CD8-positive, alpha-beta T cell (primary cell): ENCODE measurements at regions of chr22 and their contacts with region 1.

Region 1: GRCh38 chr22:43187171-43188099 is 501 bp upstream of the TTLL12 start:
- DNase-seq: peak; percentile 89 to 99 (median 97)
- ATAC-seq: peak; percentile 84
- H3K4me3 ChIP-seq: peak overlapping the region; percentile 46
- H3K4me3 Mint-ChIP-seq: peak overlapping the region; percentile 79
- H3K27ac ChIP-seq: peak overlapping the region; percentile 84 to 90
- H3K27ac Mint-ChIP-seq: peak overlapping the region; percentile 98
- H3K4me1 ChIP-seq: peaks cover 16% of the 10 kb centered on the region
- H3K4me1 Mint-ChIP-seq: peaks cover 21% of the 10 kb centered on the region
- H3K27me3 ChIP-seq: no peaks in the 10 kb centered on the region
- H3K27me3 Mint-ChIP-seq: no peaks in the 10 kb centered on the region
- CTCF ChIP-seq: peak; percentile 23

Region 2: DNA sequence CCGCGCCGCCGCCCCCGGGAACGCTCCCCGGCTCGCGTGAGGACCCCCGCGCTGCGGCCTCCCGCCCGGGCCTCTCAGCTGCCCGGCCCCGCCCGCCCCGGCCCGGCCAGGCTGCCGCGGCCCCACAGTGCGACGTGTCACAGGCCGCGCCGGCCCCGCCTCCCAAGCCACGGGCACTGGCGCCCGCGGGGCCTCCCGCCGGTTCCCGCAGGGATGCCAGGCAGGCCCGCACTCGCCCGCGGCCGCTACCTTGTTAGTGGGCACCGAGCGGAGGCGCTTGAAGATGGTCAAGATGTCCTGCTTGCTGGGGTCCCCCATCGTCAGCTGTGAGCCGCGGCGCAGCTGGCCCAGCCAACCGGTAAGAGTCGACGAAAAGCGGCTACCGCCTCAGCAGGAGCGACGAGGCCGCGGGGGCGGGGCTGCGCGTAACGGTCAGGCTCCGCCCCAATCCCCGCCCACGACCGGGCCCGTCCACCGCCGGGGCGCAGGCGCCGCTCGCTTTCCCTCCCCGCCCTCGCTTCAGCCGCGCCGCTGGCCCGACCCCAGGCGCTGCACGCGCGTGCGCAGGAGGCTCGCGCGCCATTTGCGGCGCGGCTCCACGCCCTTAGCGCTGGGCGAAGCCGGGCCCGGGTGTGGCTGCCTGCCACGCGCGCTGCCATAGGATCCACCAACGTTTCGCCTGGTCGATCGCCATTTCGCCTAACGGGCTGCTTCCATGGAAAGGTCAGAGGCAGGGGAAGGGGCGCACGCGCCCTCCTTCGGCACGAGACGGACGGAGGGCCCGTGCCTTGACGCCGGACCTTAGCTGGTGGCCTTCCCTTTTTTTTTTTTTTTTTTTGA is 330.4 kb before region 1 on chr22 and contains the start of gene ARFGAP3:
- CTCF ChIA-PET with region 1: no interaction called
- POLR2A ChIA-PET with region 1: interaction called, 5 read pairs
- intact Hi-C with region 1: loop called in 1 of 2 experiments (anchors 2 kb)
- DNase-seq: peak; percentile 89 to 98 (median 94)
- ATAC-seq: peak; percentile 95
- H3K4me3 ChIP-seq: peak within 1 kb of the TSS; percentile 85 to 91
- H3K4me3 Mint-ChIP-seq: peak within 1 kb of the TSS; percentile 80
- H3K27ac ChIP-seq: peak within 1 kb of the TSS; percentile 90 to 92
- H3K27ac Mint-ChIP-seq: peak within 1 kb of the TSS; percentile 85
- H3K4me1 ChIP-seq: peaks cover 24% of the 10 kb centered on the region
- H3K4me1 Mint-ChIP-seq: peaks cover 11% of the 10 kb centered on the region
- H3K27me3 ChIP-seq: no peaks in the 10 kb centered on the region
- H3K27me3 Mint-ChIP-seq: no peaks in the 10 kb centered on the region
- CTCF ChIP-seq: no peak
- total RNA-seq, gene ARFGAP3: 25.4 TPM

Region 3: DNA sequence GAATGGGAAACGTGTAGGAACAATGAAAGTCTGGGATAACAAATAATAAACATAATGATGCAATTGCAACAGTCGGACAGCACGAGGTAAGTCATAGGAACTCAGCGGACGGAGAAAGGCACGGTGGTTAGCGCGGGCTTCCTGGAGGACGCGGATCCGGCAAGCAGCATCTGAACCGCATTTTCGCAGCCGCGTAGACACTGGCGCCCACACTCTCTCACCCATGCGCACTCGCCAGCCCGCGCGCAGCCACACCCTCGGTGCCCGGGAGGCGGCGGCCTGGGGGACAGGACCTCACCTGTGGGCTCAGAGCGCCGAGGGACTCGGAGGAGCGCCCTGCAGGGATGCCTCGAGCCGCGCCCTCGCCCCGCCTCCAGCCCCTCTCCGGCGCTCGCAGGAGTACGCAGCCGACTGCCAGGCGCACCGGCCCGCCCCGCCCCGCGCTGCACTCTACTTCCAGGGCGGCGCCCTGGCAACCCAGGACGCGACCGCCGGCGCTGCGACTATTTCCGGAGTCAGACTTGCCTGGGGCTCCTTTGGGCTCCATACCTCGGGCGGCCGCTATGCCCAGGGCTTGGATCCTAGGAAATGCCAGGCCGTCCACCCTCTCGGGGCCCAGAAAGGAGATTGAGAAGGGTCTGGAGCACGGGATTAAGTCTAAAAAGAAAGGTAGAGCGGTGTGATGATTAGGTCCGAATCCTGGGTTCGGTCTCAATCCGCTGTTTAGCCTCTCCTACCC is 98.3 kb before region 1 on chr22 and contains the start of gene TTLL1:
- CTCF ChIA-PET with region 1: no interaction called
- POLR2A ChIA-PET with region 1: no interaction called
- intact Hi-C with region 1: loop called in 1 of 2 experiments (anchors 2 kb)
- DNase-seq: peak; percentile 70 to 91 (median 86)
- ATAC-seq: peak; percentile 90
- H3K4me3 ChIP-seq: peak within 1 kb of the TSS; percentile 60 to 62
- H3K4me3 Mint-ChIP-seq: peak within 1 kb of the TSS; percentile 85
- H3K27ac ChIP-seq: peak within 1 kb of the TSS; percentile 42 to 52
- H3K27ac Mint-ChIP-seq: peak within 1 kb of the TSS; percentile 71
- H3K4me1 ChIP-seq: peaks cover 8% of the 10 kb centered on the region
- H3K4me1 Mint-ChIP-seq: peaks cover 25% of the 10 kb centered on the region
- H3K27me3 ChIP-seq: no peaks in the 10 kb centered on the region
- H3K27me3 Mint-ChIP-seq: no peaks in the 10 kb centered on the region
- CTCF ChIP-seq: no peak
- total RNA-seq, gene TTLL1: 3.5 to 3.9 TPM

Region 4: DNA sequence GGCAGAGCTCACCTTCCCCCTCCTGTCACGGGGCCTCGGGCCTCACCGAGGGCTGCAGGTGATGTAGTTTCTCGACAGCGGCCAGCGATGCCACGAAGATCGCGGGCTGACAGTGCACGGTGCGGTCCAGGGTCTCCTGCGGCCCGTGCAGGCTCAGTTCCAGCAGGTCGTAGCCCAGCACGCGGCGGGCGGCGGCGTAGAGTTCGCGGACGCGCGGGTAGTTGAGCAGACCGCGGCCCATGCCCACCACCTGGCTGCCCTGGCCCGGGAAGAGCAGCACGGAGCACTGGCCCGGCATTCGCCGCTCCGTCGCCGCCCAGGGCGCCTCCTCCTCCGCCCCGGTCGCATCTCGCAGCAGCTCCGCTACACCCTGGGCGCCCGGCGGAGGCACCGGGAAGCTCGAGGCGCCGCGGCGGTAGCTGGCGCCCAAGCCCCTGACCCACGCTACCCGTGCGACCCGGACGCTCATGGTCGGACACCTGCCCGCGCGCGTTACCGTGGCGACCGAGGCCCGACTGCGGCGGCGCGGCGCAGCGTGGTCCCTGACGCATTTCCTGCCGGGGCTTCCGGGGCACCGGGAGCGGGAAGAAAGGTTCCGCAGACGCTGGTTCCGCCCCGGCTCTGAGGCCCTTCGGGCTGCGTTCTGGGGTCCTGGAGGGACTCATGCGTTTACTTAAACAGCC is 44.4 kb before region 1 on chr22 and contains the start of gene MCAT:
- CTCF ChIA-PET with region 1: interaction called, 3 read pairs
- POLR2A ChIA-PET with region 1: interaction called, 7 read pairs
- intact Hi-C with region 1: loop called (anchors 1 kb)
- DNase-seq: peak; percentile 62 to 89 (median 78)
- ATAC-seq: peak; percentile 82
- H3K4me3 ChIP-seq: peak within 1 kb of the TSS; percentile 68 to 88
- H3K4me3 Mint-ChIP-seq: peak within 1 kb of the TSS; percentile 87
- H3K27ac ChIP-seq: peak within 1 kb of the TSS; percentile 85 to 90
- H3K27ac Mint-ChIP-seq: peak within 1 kb of the TSS; percentile 88
- H3K4me1 ChIP-seq: peaks cover 7% of the 10 kb centered on the region
- H3K4me1 Mint-ChIP-seq: peaks cover 25% of the 10 kb centered on the region
- H3K27me3 ChIP-seq: no peaks in the 10 kb centered on the region
- H3K27me3 Mint-ChIP-seq: no peaks in the 10 kb centered on the region
- CTCF ChIP-seq: no peak
- total RNA-seq, gene MCAT: 5.9 to 7.8 TPM

Region 5: GRCh38 chr22:43222262-43222661 is 34.8 kb after region 1 on chr22:
- CTCF ChIA-PET with region 1: no interaction called
- POLR2A ChIA-PET with region 1: no interaction called
- intact Hi-C with region 1: no loop called
- DNase-seq: no peak
- ATAC-seq: no peak
- H3K4me3 ChIP-seq: no peak overlapping the region
- H3K4me3 Mint-ChIP-seq: no peak overlapping the region
- H3K27ac ChIP-seq: no peak overlapping the region
- H3K27ac Mint-ChIP-seq: no peak overlapping the region
- H3K4me1 ChIP-seq: no peaks in the 10 kb centered on the region
- H3K4me1 Mint-ChIP-seq: peaks cover 2% of the 10 kb centered on the region
- H3K27me3 ChIP-seq: no peaks in the 10 kb centered on the region
- H3K27me3 Mint-ChIP-seq: no peaks in the 10 kb centered on the region
- CTCF ChIP-seq: no peak

Region 6: DNA sequence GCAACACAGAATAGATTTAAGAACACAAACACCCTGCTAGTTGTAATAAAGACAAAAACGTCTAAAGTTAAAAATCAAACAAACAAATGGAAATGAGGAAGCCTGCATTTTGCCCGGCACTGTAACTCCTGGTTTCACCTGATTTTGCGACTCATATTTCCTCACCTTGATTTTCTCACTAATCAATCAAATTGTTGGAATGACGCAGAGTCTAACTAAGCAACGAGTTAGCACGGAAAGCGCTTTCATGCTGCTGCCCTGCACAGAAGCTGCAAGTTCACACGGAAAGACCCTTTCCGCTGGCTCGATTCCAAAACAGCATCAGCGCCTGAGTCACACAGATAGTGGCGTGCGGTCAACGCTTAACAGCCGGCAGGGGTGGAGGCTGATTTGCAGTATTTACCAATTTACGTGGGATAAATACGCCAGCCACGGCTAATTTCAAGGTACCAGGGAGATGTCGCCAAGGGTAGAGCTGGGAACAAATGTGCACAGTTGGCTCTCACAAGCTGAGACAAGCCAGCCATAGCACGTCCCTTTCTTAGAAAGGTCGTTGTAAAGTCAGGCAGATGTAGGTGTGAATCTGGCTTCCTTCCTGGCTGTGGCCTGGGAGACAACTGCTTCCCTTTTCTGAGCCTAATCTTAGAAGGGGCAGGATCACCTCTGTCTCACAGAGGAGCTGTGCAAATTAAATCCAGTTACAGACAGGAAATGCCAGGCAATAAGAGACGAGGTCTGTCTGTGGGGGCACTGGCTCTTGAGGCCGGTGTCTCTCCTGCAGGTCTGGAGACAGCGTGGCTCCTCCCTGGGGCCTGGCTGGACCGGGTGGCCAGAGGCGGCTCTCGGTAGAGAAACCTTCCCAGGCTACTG is 76.4 kb after region 1 on chr22:
- CTCF ChIA-PET with region 1: no interaction called
- POLR2A ChIA-PET with region 1: interaction called, 4 read pairs
- intact Hi-C with region 1: loop called in 1 of 2 experiments (anchors 2 kb)
- DNase-seq: peak; percentile 62 to 98 (median 85)
- ATAC-seq: peak; percentile 82
- H3K4me3 ChIP-seq: peak overlapping the region; percentile 23 to 25
- H3K4me3 Mint-ChIP-seq: peak overlapping the region; percentile 71
- H3K27ac ChIP-seq: peak overlapping the region; percentile 49 to 84
- H3K27ac Mint-ChIP-seq: peak overlapping the region; percentile 79
- H3K4me1 ChIP-seq: peaks cover 29% of the 10 kb centered on the region
- H3K4me1 Mint-ChIP-seq: peaks cover 26% of the 10 kb centered on the region
- H3K27me3 ChIP-seq: no peaks in the 10 kb centered on the region
- H3K27me3 Mint-ChIP-seq: no peaks in the 10 kb centered on the region
- CTCF ChIP-seq: no peak

Region 7: DNA sequence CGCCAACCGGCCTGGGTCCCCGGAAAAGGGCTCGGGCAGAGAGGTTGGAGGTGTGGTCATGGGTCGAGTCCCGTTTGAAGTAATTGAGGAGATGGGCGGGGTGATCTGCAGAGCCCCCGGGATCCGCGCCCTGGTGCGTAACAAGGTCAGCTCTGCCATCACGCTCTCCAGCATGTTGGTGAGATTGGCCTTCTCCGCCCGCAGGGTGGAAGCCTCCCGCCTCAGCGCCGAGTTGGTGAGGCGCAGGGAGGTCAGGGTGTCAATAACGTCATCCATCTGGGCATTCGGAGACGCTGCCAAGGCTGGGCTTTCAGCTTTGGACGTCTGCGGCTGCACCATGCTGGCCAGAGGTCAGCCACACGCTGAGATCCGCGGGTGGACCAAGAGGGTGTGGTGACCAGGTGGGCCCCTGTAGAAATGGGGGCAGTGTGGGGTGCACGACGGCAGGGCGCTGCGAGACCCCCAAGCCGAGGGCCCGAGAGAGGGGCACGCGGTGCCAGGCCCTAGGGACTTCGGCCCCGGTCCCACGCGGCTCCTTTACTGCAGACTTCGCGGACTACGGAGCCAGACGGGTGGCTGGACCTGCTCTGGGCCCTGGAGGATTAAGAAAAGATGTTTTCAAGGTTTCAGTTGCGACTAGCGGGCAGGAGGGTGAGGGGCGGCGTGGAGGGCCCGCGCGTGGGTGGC is 1309.9 kb after region 1 on chr22:
- CTCF ChIA-PET with region 1: no interaction called
- POLR2A ChIA-PET with region 1: no interaction called
- intact Hi-C with region 1: loop called in 1 of 2 experiments (anchors 10 kb)
- DNase-seq: peak in 2 of 9 experiments; percentile 30 to 54
- ATAC-seq: no peak
- H3K4me3 ChIP-seq: peak overlapping the region; percentile 46 to 65
- H3K4me3 Mint-ChIP-seq: peak overlapping the region; percentile 77
- H3K27ac ChIP-seq: peak overlapping the region; percentile 64 to 81
- H3K27ac Mint-ChIP-seq: peak overlapping the region; percentile 81
- H3K4me1 ChIP-seq: peaks cover 44% of the 10 kb centered on the region
- H3K4me1 Mint-ChIP-seq: peaks cover 38% of the 10 kb centered on the region
- H3K27me3 ChIP-seq: no peaks in the 10 kb centered on the region
- H3K27me3 Mint-ChIP-seq: no peaks in the 10 kb centered on the region
- CTCF ChIP-seq: no peak

Region 8: GRCh38 chr22:44701824-44702478 is 1514.5 kb after region 1 on chr22 and contains the start of gene PRR5:
- CTCF ChIA-PET with region 1: no interaction called
- POLR2A ChIA-PET with region 1: no interaction called
- intact Hi-C with region 1: loop called in 1 of 2 experiments (anchors 5 kb)
- DNase-seq: peak; percentile 57 to 94 (median 83)
- ATAC-seq: peak; percentile 89
- H3K4me3 ChIP-seq: peak within 1 kb of the TSS; percentile 60 to 76
- H3K4me3 Mint-ChIP-seq: peak within 1 kb of the TSS; percentile 84
- H3K27ac ChIP-seq: peak within 1 kb of the TSS; percentile 61 to 77
- H3K27ac Mint-ChIP-seq: peak within 1 kb of the TSS; percentile 86
- H3K4me1 ChIP-seq: peaks cover 50% of the 10 kb centered on the region
- H3K4me1 Mint-ChIP-seq: peaks cover 46% of the 10 kb centered on the region
- H3K27me3 ChIP-seq: no peaks in the 10 kb centered on the region
- H3K27me3 Mint-ChIP-seq: no peaks in the 10 kb centered on the region
- CTCF ChIP-seq: no peak
- total RNA-seq, gene PRR5: 47.6 to 49.3 TPM